CD14-positive monocyte (primary cell): ENCODE measurements at regions of chr14 and their contacts with region 1.

Region 1: GRCh38 chr14:60980811-60981632 is at the starts of genes SLC38A6 and TRMT5:
- DNase-seq: peak; percentile 84 to 91 (median 86)
- H3K4me3 ChIP-seq: peak within 1 kb of the TSS; percentile 82 to 97 (median 96)
- H3K4me3 Mint-ChIP-seq: no peak within 1 kb of the TSS
- H3K27ac ChIP-seq: peak within 1 kb of the TSS; percentile 81 to 93
- H3K27ac Mint-ChIP-seq: no peak within 1 kb of the TSS
- H3K4me1 ChIP-seq: peaks cover 43 to 56% of the 10 kb centered on the region in 2 donors
- H3K4me1 Mint-ChIP-seq: peaks cover 17% of the 10 kb centered on the region
- H3K27me3 ChIP-seq: no peaks in the 10 kb centered on the region
- H3K27me3 Mint-ChIP-seq: no peaks in the 10 kb centered on the region
- CTCF ChIP-seq: no peak
- polyA plus RNA-seq, gene SLC38A6: 10.3 to 15.9 (median 14.0) TPM
- polyA plus RNA-seq, gene TRMT5: 0.89 to 2.8 (median 1.9) TPM

Region 2: GRCh38 chr14:60248697-60249318 is 732.2 kb before region 1 on chr14 and contains the start of gene PPM1A:
- intact Hi-C with region 1: loop called in 1 of 2 experiments (anchors 5 kb)
- DNase-seq: peak; percentile 96 to 97 (median 96)
- H3K4me3 ChIP-seq: peak within 1 kb of the TSS; percentile 92 to 98 (median 93)
- H3K4me3 Mint-ChIP-seq: peak within 1 kb of the TSS; percentile 87 to 95
- H3K27ac ChIP-seq: peak within 1 kb of the TSS; percentile 98 to 99
- H3K27ac Mint-ChIP-seq: peak within 1 kb of the TSS; percentile 97 to 100 (median 99)
- H3K4me1 ChIP-seq: peaks cover 35 to 41% of the 10 kb centered on the region in 2 donors
- H3K4me1 Mint-ChIP-seq: peaks cover 51% of the 10 kb centered on the region
- H3K27me3 ChIP-seq: no peaks in the 10 kb centered on the region
- H3K27me3 Mint-ChIP-seq: peaks cover 0 to 3% (median 1%) of the 10 kb centered on the region in 3 donors
- CTCF ChIP-seq: no peak
- polyA plus RNA-seq, gene PPM1A: 18.4 to 34.1 (median 21.5) TPM

Region 3: GRCh38 chr14:61103481-61104339 is 122.7 kb after region 1 on chr14:
- intact Hi-C with region 1: loop called (anchors 5 to 10 kb)
- DNase-seq: peak; percentile 89 to 97 (median 93)
- H3K4me3 ChIP-seq: peak overlapping the region in 2 of 3 experiments; percentile 9 to 49
- H3K4me3 Mint-ChIP-seq: peak overlapping the region; percentile 55 to 82
- H3K27ac ChIP-seq: peak overlapping the region; percentile 89 to 98
- H3K27ac Mint-ChIP-seq: peak overlapping the region; percentile 98 to 100 (median 99)
- H3K4me1 ChIP-seq: peaks cover 57 to 59% of the 10 kb centered on the region in 2 donors
- H3K4me1 Mint-ChIP-seq: peaks cover 58% of the 10 kb centered on the region
- H3K27me3 ChIP-seq: no peaks in the 10 kb centered on the region
- H3K27me3 Mint-ChIP-seq: no peaks in the 10 kb centered on the region
- CTCF ChIP-seq: no peak